Mammary epithelial cell (primary cell): ENCODE measurements at regions of chr3 and their contacts with region 1.

Region 1: DNA sequence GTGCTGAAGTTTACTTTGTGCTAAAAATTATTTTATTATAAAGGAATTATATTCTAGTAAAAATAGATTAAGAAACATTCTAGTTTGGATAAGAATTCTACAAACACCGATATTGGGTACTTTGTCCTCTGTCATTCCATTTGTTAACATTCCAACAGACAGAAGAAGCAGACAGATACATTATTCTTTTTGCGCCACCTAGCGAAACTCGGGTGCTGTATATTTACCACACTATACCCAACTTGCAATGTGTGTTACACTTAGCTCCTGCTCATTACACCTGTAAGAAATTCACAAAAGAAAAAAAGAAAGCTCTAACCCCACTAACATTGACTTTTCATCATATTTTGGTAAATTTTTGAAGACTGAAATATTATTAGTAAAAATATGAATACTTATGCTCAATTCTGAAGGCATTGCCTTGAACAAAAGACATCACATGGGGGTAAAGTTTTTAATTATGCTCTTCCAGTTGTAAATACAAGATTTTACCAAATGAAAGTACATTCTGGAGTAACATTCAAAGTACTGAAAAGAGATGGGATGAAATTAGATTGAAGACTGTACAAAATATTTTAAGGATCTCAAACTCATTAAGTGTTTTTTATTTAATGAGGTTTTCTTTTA is 136.5 kb upstream of the MLF1 start:
- DNase-seq: peak; percentile 63
- H3K4me3 ChIP-seq: no peak overlapping the region
- H3K27ac ChIP-seq: no peak overlapping the region
- H3K4me1 ChIP-seq: no peaks in the 10 kb centered on the region
- H3K27me3 ChIP-seq: no peaks in the 10 kb centered on the region
- CTCF ChIP-seq: peak; percentile 78 to 79

Region 2: GRCh38 chr3:157618075-157618760 is 816.3 kb before region 1 on chr3:
- CTCF ChIA-PET with region 1: no interaction called
- dilution Hi-C with region 1: no loop called
- in situ Hi-C with region 1: loop called in 1 of 2 experiments (anchors 25 kb)
- intact Hi-C with region 1: loop called (anchors 5 kb)
- DNase-seq: peak; percentile 79
- H3K4me3 ChIP-seq: no peak overlapping the region
- H3K27ac ChIP-seq: no peak overlapping the region
- H3K4me1 ChIP-seq: peaks cover 4% of the 10 kb centered on the region
- H3K27me3 ChIP-seq: no peaks in the 10 kb centered on the region
- CTCF ChIP-seq: peak; percentile 57 to 61

Region 3: DNA sequence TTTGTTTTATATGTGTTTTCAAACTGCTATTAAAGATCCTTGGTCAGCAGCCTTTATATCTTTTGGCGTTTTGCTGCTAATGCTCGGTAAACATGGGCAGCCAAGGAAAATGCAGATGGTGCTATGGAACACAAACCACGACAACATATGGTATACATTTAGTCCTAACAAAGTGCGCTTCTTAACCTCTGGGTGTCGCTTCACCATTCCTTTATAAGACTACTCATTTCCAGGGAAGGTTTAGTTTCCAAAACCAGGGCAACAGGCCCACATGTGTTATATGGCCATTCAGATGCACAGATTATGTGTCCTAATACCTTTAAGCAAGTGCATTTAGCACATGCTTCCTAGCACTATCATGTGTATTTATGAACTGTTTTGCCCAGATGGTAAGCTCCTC is 343.0 kb before region 1 on chr3:
- CTCF ChIA-PET with region 1: no interaction called
- dilution Hi-C with region 1: no loop called
- in situ Hi-C with region 1: loop called in 1 of 2 experiments (anchors 25 kb)
- intact Hi-C with region 1: loop called (anchors 1 kb)
- DNase-seq: peak; percentile 35
- H3K4me3 ChIP-seq: no peak overlapping the region
- H3K27ac ChIP-seq: no peak overlapping the region
- H3K4me1 ChIP-seq: no peaks in the 10 kb centered on the region
- H3K27me3 ChIP-seq: peaks cover 27% of the 10 kb centered on the region
- CTCF ChIP-seq: peak; percentile 32 to 57

Region 4: GRCh38 chr3:158109804-158110657 is 324.5 kb before region 1 on chr3 and contains the start of gene RSRC1:
- CTCF ChIA-PET with region 1: no interaction called
- dilution Hi-C with region 1: no loop called
- in situ Hi-C with region 1: no loop called
- intact Hi-C with region 1: loop called (anchors 5 kb)
- DNase-seq: peak; percentile 89
- H3K4me3 ChIP-seq: peak within 1 kb of the TSS; percentile 65 to 87 (median 86)
- H3K27ac ChIP-seq: peak within 1 kb of the TSS; percentile 74
- H3K4me1 ChIP-seq: peaks cover 17% of the 10 kb centered on the region
- H3K27me3 ChIP-seq: peaks cover 11% of the 10 kb centered on the region
- CTCF ChIP-seq: no peak
- total RNA-seq, gene RSRC1: 30.0 to 35.6 TPM

Region 5: DNA sequence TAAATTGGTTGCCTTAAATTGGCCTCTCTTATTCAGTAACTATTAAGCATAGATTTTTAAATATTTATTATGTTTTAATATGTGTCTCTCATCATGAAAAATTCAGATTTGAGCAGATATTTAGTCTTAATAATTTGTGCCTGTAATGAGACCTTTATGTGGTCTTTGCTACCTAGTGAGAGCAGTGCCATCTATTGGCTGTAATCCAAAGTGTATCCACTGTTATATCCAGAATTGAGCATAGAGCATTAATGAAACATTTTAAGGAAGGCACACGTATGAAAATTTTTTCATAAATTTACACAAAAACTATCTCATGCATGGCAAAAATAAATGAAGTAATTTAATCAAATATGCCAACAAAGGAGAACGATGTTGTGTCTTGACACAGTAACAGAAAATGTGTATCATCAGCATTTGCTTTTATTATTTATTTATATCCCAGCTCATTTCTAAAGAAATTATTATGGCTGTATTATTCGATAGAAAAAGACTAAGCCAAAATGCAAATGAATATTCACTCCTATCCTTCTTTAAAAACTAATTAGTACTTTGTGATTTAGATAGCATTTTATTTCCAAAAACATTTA is 121.1 kb before region 1 on chr3:
- CTCF ChIA-PET with region 1: no interaction called
- dilution Hi-C with region 1: no loop called
- in situ Hi-C with region 1: no loop called
- intact Hi-C with region 1: loop called (anchors 5 kb)
- DNase-seq: peak; percentile 32
- H3K4me3 ChIP-seq: no peak overlapping the region
- H3K27ac ChIP-seq: no peak overlapping the region
- H3K4me1 ChIP-seq: no peaks in the 10 kb centered on the region
- H3K27me3 ChIP-seq: no peaks in the 10 kb centered on the region
- CTCF ChIP-seq: peak; percentile 49 to 60